WTC11 (cell line): ENCODE measurements at regions of chr6 and their contacts with region 1.

Region 1: GRCh38 chr6:148177589-148178233 is 164.9 kb upstream of the SASH1 start:
- DNase-seq: peak; percentile 79
- ATAC-seq: peak; percentile 76
- H3K4me3 Mint-ChIP-seq: no peak overlapping the region
- H3K27ac Mint-ChIP-seq: no peak overlapping the region
- H3K4me1 Mint-ChIP-seq: peaks cover 20% of the 10 kb centered on the region
- H3K27me3 Mint-ChIP-seq: no peaks in the 10 kb centered on the region
- CTCF ChIP-seq: peak; percentile 71

Region 2: DNA sequence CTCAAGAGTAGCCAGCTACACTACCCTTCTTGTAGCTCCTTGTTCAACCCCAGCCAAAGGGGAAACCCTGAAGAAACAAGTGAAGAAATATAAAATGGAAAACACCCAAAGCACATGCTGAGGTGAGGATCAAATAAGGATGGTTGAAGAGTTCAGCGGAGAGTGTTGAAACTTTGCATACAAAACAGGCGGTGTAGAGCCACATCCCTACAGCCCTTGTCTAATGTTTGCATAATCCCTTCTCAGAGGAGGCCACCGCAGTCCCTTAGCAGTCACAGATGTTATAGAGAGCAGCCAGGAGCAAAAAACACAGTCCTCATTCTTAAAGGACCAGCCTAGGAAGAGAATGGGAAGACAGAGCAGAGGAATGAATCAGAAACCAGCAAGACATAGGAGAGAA is 185.8 kb before region 1 on chr6:
- CTCF ChIA-PET with region 1: no interaction called
- POLR2A ChIA-PET with region 1: no interaction called
- DNase-seq: no peak
- ATAC-seq: no peak
- H3K4me3 Mint-ChIP-seq: no peak overlapping the region
- H3K27ac Mint-ChIP-seq: no peak overlapping the region
- H3K4me1 Mint-ChIP-seq: no peaks in the 10 kb centered on the region
- H3K27me3 Mint-ChIP-seq: no peaks in the 10 kb centered on the region
- CTCF ChIP-seq: no peak

Region 3: GRCh38 chr6:148136586-148136985 is 41.1 kb before region 1 on chr6:
- CTCF ChIA-PET with region 1: no interaction called
- POLR2A ChIA-PET with region 1: no interaction called
- DNase-seq: no peak
- ATAC-seq: no peak
- H3K4me3 Mint-ChIP-seq: no peak overlapping the region
- H3K27ac Mint-ChIP-seq: no peak overlapping the region
- H3K4me1 Mint-ChIP-seq: no peaks in the 10 kb centered on the region
- H3K27me3 Mint-ChIP-seq: peaks cover 5% of the 10 kb centered on the region
- CTCF ChIP-seq: no peak

Region 4: DNA sequence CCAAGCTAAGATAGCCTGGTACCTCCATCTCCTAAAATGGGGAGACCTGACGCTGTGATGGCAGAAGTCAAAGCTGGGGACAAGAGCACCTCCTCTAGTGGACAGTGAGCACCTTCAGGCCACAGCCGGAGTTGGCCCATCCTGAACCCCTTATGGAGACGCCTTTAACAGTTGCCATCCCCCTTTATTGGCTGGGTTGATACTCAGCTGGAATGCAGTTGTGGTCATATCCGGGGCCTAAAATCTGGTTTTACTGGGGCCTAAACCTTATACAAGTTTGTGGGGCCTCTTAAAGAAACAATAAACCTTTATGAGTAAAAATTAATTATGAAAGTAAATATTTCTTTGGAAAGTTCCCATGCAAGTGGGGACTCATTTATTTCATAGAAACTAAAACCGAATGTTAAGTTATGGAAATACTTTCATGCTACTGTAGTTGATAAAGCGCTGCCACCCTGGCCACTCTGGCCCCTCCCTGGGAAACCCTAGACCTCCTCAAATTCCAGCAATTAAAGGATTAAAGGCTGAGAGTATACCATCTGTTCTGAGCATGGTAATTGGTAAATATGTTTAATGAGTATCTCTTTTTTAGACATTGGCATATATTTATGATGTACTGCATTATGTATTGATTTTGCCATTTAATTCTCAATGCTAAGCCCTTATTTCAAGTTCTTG is 69.8 kb after region 1 on chr6:
- CTCF ChIA-PET with region 1: interaction called, 13 read pairs
- POLR2A ChIA-PET with region 1: no interaction called
- DNase-seq: no peak
- ATAC-seq: no peak; the same call in 1 of the 2 replicates
- H3K4me3 Mint-ChIP-seq: no peak overlapping the region
- H3K27ac Mint-ChIP-seq: no peak overlapping the region
- H3K4me1 Mint-ChIP-seq: peaks cover 11% of the 10 kb centered on the region
- H3K27me3 Mint-ChIP-seq: no peaks in the 10 kb centered on the region; the same call in 1 of the 2 replicates
- CTCF ChIP-seq: no peak

Region 5: GRCh38 chr6:148464319-148465010 is 286.8 kb after region 1 on chr6:
- CTCF ChIA-PET with region 1: interaction called, 11 read pairs
- POLR2A ChIA-PET with region 1: no interaction called
- DNase-seq: peak; percentile 69
- ATAC-seq: peak; percentile 86
- H3K4me3 Mint-ChIP-seq: no peak overlapping the region
- H3K27ac Mint-ChIP-seq: peak overlapping the region; percentile 79; the same call in 1 of the 2 replicates
- H3K4me1 Mint-ChIP-seq: peaks cover 21% of the 10 kb centered on the region
- H3K27me3 Mint-ChIP-seq: no peaks in the 10 kb centered on the region
- CTCF ChIP-seq: peak; percentile 73